Activated CD4-positive, alpha-beta T cell treated with anti-CD3 and anti-CD28 coated beads for 36 hours (primary cell): ENCODE measurements at regions of chr16 and their contacts with region 1.

Region 1: DNA sequence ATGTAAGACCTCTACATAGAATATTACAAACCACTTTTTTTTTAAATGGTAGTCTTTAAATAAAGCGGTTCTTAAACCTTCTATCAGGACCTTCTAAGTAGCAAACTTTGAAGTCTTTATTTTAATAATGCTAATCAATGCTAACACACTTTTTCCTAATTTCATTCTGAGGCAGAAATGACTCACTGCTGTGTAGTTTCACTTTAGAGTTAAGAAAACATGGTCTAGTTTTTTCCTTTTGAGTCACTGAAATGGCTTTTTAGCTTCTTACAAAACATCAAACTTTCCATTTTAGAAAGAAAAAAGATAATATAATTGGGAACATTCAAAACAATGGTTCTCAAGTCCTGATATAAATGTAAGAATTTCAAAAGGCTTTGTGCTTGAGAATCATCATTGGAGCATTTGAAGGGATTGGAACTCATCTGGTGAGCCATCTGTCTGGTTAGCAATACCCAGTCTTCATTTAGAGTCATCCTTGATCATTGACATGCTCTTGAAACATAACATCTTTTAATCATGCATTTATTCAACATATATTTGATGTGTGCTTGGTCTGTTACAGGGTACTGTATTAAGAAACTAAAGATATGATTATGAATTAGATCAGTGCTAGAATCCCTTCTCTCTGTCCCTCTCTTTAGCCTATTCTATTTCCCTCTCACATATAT is 258.3 kb upstream of the MON1B start:
- DNase-seq: no peak
- ATAC-seq: peak; percentile 85
- H3K4me3 Mint-ChIP-seq: no peak overlapping the region
- H3K27ac Mint-ChIP-seq: no peak overlapping the region
- H3K4me1 Mint-ChIP-seq: peaks cover 4% of the 10 kb centered on the region
- H3K27me3 Mint-ChIP-seq: peaks cover 10% of the 10 kb centered on the region

Region 2: DNA sequence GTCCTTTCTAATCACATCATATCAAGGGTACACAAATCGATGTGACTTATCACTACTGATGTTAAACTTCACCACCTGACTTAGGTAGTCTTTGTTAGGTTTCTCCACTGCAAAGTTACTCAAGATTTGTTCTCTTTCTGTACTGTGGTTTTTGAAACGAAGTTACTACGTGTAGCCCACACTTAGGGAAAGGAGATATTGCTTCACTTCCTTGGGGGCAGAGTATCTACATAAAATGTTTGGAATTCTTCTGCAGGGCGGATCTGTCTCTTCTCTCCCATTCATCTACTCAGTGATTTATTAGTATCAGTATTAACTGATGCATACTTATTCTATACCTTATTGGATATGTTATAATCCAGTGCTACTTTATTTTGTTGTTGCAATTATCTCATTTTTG is 145.3 kb before region 1 on chr16:
- CTCF ChIA-PET with region 1: no interaction called
- POLR2A ChIA-PET with region 1: no interaction called
- intact Hi-C with region 1: no loop called
- DNase-seq: no peak
- ATAC-seq: no peak
- H3K4me3 Mint-ChIP-seq: no peak overlapping the region
- H3K27ac Mint-ChIP-seq: no peak overlapping the region
- H3K4me1 Mint-ChIP-seq: no peaks in the 10 kb centered on the region
- H3K27me3 Mint-ChIP-seq: no peaks in the 10 kb centered on the region

Region 3: GRCh38 chr16:76800196-76800595 is 132.5 kb before region 1 on chr16:
- CTCF ChIA-PET with region 1: no interaction called
- POLR2A ChIA-PET with region 1: no interaction called
- intact Hi-C with region 1: loop called in 1 of 2 experiments (anchors 1 kb)
- DNase-seq: no peak
- ATAC-seq: no peak
- H3K4me3 Mint-ChIP-seq: no peak overlapping the region
- H3K27ac Mint-ChIP-seq: no peak overlapping the region
- H3K4me1 Mint-ChIP-seq: peaks cover 6% of the 10 kb centered on the region
- H3K27me3 Mint-ChIP-seq: no peaks in the 10 kb centered on the region